Heart left ventricle (tissue), 16 donors: ENCODE measurements at regions of chr21 and their contacts with region 1.

Region 1: DNA sequence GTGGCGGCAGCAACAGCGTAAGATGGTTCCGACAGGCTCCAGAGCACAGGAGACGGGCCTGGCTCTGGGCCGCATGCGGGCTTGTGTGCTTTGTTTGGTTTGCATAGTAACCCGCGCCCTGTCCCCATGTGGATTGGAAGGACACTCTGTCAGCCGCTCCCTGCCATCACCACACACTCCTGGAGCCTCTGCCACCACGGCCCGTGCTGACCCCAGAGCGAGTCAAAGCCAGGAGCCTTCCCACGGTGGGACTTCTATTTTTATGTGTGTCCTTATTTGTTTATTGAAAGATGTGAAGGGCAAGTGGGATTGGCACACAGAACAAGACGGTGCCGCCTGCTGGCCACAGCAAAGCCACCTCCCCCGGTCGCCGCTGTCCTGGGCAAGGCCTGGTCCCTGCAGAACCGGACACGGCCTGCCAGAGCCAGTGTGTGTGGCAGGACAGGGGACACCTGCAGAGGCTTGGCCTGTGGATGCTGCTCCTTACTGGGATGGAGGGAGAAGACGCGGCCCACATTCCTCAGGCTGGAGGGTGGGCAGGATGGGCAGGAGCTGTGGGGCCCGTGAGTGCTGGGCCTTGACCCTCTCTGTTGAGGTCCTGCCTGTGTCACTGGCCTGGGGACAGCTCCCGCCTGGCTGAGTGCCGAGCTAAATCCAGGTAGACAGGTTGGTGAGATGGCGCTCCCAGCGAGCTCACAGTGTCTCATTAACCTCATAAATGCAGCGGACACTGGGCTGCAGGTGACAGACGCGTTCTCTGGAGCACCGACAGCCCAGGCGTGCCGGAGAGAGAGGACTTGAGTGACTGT is 64.4 kb downstream of the AGPAT3 start:
- DNase-seq: peak; percentile 78 to 93 (median 82)
- ATAC-seq: peak; percentile 92 to 94 (median 93)
- H3K4me3 ChIP-seq: peak overlapping the region in 1 of 12 donors; percentile 15
- H3K27ac ChIP-seq: peak overlapping the region; percentile 73 to 95 (median 86)
- H3K4me1 ChIP-seq: peaks cover 4 to 60% (median 34%) of the 10 kb centered on the region in 12 donors
- H3K27me3 ChIP-seq: no peaks in the 10 kb centered on the region
- CTCF ChIP-seq: peak in 9 of 12 donors; percentile 3 to 57 (median 39)
- POLR2A ChIP-seq: peak in 1 of 2 donors; percentile 23

Region 2: DNA sequence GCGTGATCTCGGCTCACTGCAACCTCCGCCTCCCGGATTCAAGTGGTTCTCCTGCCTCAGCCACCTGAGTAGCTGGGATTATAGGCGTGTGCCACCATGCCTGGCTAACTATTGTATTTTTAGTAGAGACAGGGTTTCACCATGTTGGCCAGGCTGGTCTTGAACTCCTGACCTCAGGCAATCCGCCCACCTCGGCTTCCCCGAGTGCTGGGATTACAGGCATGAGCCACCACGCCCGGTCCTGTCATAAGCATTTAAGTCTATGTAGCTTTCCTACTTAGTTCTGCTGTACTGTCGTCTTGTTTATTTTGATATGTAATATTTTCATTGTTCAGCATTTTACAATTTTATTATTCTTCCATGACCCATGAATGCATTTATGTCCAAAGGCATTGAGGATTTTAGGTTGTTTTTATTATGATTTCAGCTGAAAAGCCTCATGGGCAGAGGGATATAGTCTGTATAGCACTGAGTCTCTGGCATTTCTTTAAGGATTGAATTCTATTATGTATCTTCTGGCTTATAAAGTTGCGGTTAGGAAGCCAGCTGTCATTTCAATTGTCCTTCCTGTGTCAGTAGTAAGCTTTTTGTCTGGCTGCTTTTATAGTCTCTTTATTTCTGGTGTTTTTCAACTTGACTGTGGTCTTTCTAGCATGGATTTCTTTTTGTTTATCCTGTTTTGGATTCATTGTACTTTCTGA is 55.2 kb before region 1 on chr21:
- intact Hi-C with region 1: loop called in 6 of 10 experiments (anchors 5 kb)
- DNase-seq: no peak
- ATAC-seq: no peak
- H3K4me3 ChIP-seq: no peak overlapping the region
- H3K27ac ChIP-seq: no peak overlapping the region
- H3K4me1 ChIP-seq: peaks cover 0 to 45% (median 6%) of the 10 kb centered on the region in 12 donors
- H3K27me3 ChIP-seq: no peaks in the 10 kb centered on the region
- CTCF ChIP-seq: no peak
- POLR2A ChIP-seq: no peak

Region 3: GRCh38 chr21:44011980-44012527 is 82.6 kb after region 1 on chr21 and contains the start of gene TRAPPC10:
- intact Hi-C with region 1: no loop called
- DNase-seq: peak; percentile 88 to 93 (median 90)
- ATAC-seq: peak; percentile 73 to 95 (median 93)
- H3K4me3 ChIP-seq: peak within 1 kb of the TSS; percentile 72 to 99 (median 94)
- H3K27ac ChIP-seq: peak within 1 kb of the TSS; percentile 76 to 99 (median 97)
- H3K4me1 ChIP-seq: peaks cover 7 to 48% (median 25%) of the 10 kb centered on the region in 12 donors
- H3K27me3 ChIP-seq: no peaks in the 10 kb centered on the region
- CTCF ChIP-seq: no peak
- POLR2A ChIP-seq: peak; percentile 76 to 91
- total RNA-seq, gene TRAPPC10: 14.6 to 32.0 (median 22.5) TPM